ENCODE measurements at regions of chr4 and their contacts with region 1.

Region 1: DNA sequence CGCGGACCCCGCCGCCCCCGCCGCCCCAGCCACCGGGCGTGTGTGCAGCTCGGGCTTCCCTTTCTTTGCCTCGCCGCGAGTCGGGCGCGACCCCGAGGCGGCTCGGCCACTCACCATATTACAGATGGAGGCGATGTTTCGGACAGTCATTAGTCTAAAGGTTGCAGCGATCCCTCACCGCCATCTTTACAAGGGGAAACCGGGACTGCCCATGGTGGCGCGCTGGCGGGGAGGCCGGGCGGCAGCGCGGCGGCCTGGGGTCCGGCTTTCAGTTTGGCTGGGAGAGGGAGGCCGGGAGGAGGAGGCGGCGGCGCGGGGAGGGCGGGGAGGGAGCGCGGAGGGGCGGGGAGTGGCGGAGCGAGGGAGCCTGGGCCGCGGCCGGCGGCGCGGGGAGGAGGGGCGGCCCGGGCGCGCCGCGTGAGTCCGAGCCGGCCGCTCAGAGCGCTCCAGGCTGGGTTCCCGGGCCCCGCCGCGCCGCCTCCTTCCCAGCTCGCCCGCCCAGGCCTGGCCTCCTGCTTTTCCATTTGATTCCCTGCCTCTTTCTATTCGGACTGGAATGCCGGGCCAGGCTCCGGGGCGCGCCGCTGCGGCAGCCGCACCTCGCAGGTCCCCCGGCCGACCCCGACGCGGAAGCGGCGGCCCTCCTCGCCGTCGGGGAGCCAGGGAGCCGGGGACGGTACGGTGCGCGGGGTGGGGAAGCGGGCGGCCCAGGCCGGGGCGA is at the start of gene USP46:
- DNase-seq: peak; percentile 72
- H3K4me3 ChIP-seq: peak within 1 kb of the TSS; percentile 54 to 92 (median 81)
- H3K27ac ChIP-seq: peak within 1 kb of the TSS; percentile 92 to 95 (median 93)
- H3K4me1 ChIP-seq: peaks cover 7 to 12% of the 10 kb centered on the region in 2 donors
- H3K27me3 ChIP-seq: no peaks in the 10 kb centered on the region
- CTCF ChIP-seq: peak in 1 of 6 experiments; percentile 11
- POLR2A ChIP-seq: peak; percentile 34 to 74
- total RNA-seq, gene USP46: 10.8 to 17.6 (median 14.2) TPM

Region 2: GRCh38 chr4:52701207-52701606 is 42.0 kb after region 1 on chr4:
- intact Hi-C with region 1: loop called (anchors 10 kb)
- DNase-seq: no peak
- H3K4me3 ChIP-seq: no peak overlapping the region
- H3K27ac ChIP-seq: no peak overlapping the region
- H3K4me1 ChIP-seq: peaks cover 0 to 11% of the 10 kb centered on the region in 2 donors
- H3K27me3 ChIP-seq: no peaks in the 10 kb centered on the region
- CTCF ChIP-seq: no peak
- POLR2A ChIP-seq: no peak

Region 3: DNA sequence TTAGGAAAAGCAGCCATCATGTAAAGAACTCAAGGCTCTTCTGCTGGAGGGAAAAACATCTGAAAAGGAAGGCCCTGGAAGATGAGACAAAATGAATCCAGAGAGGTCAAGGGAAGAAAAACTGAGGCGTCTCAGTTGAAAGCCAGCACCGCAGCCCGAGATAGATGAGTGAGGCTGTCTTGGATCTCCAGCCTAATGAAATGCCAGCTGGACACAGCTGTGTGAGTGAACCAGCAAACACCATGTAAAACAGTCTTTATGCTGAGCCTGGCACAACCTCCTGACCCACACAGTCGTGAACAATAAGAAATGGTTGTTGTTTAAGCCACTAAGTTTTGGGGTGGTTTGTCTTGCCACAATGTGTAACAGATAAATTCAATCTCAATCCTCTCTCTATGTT is 154.4 kb after region 1 on chr4:
- intact Hi-C with region 1: no loop called
- DNase-seq: no peak
- H3K4me3 ChIP-seq: no peak overlapping the region
- H3K27ac ChIP-seq: no peak overlapping the region
- H3K4me1 ChIP-seq: no peaks in the 10 kb centered on the region
- H3K27me3 ChIP-seq: no peaks in the 10 kb centered on the region
- CTCF ChIP-seq: no peak
- POLR2A ChIP-seq: no peak

Measured in thyroid gland (tissue), 4 donors.